ENCODE measurements at regions of chrX and their contacts with region 1.

Region 1: DNA sequence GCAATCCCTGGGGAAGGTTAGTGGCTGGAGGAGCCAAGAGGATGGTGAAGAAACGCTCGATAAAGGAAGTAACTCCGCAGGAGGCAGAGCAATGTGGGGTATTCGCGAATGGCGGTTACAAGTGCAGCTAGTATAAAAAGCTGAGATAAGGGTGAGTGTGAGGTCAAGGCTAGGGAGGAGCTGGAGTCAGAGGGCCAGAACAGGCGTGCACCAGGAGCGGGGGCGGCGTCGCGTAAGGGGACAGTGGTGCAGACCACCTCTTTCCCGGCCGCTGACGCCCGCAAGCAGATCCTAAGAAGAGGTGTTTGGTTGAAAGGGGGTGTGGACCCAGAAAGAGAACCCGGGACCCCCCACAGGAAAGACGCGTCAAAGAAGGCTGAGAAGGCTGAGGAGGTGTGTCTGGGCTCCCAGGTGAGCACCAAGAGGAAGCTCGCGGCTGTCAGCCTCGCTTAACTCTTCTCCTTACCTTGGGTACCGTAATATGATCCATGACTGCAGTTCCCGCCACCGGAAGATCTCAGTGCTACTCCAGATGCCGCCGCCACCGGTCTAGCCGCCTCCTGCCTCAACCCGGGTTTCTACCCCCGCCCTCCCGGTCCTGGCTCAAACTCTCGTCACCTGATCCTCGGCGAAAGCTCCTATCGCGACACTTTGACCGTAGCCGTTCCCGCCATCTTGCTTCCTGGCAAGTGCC is at the start of gene MTMR8:
- DNase-seq: peak; percentile 82
- ATAC-seq: peak; percentile 89
- H3K4me3 ChIP-seq: peak within 1 kb of the TSS; percentile 49 to 85 (median 72)
- H3K4me3 Mint-ChIP-seq: peak within 1 kb of the TSS; percentile 98
- H3K27ac ChIP-seq: peak within 1 kb of the TSS; percentile 24 to 65
- H3K27ac Mint-ChIP-seq: peak within 1 kb of the TSS; percentile 90
- H3K4me1 ChIP-seq: peaks cover 0 to 15% of the 10 kb centered on the region in 2 donors
- H3K4me1 Mint-ChIP-seq: peaks cover 35% of the 10 kb centered on the region
- H3K27me3 ChIP-seq: no peaks in the 10 kb centered on the region
- H3K27me3 Mint-ChIP-seq: no peaks in the 10 kb centered on the region
- CTCF ChIP-seq: no peak
- total RNA-seq, gene MTMR8: 11.6 and 11.8 TPM in 2 replicates

Region 2: DNA sequence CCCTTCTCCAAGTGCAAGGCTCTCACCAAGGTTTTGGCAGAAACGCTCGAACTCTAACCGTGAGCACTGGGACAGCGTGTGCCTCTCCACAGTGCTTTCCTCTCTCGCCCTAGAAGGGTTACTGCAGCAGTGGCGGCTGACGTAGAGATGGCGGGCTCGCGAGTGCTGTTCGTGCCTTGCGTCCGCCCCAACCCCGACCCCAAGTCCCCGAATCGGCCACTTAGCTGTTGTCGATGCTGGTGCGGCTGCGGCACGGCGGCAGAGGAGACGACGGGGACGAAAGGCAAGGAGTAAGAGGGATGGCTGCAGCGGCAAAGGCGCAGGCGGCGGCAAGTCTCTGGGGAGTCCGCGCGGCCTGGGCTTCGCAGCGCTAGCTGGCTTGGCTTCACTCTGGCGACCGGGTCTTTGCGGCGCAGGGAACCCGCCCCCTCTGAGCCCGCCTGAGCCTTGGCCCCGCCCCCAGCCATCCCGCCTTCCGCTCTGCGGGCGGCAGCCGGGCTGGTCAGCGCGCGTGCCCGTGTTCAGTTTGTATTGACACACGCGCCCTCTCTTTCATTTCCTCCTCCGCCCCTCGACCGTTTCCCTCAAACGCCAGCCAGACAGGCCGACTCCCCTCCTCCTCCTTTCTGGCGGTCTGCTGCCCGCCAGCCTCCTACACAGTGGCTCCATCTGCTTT is 1043.9 kb before region 1 on chrX and contains the start of gene SPIN4:
- CTCF ChIA-PET with region 1: no interaction called
- POLR2A ChIA-PET with region 1: no interaction called
- intact Hi-C with region 1: loop called (anchors 10 kb)
- DNase-seq: peak; percentile 77
- ATAC-seq: peak; percentile 95
- H3K4me3 ChIP-seq: peak within 1 kb of the TSS; percentile 55 to 70 (median 63)
- H3K4me3 Mint-ChIP-seq: peak within 1 kb of the TSS; percentile 99
- H3K27ac ChIP-seq: peak within 1 kb of the TSS; percentile 28 to 29
- H3K27ac Mint-ChIP-seq: peak within 1 kb of the TSS; percentile 88
- H3K4me1 ChIP-seq: peaks cover 0 to 3% of the 10 kb centered on the region in 2 donors
- H3K4me1 Mint-ChIP-seq: peaks cover 16% of the 10 kb centered on the region
- H3K27me3 ChIP-seq: no peaks in the 10 kb centered on the region
- H3K27me3 Mint-ChIP-seq: no peaks in the 10 kb centered on the region
- CTCF ChIP-seq: no peak
- total RNA-seq, gene SPIN4: 5.4 and 5.8 TPM in 2 replicates

Region 3: DNA sequence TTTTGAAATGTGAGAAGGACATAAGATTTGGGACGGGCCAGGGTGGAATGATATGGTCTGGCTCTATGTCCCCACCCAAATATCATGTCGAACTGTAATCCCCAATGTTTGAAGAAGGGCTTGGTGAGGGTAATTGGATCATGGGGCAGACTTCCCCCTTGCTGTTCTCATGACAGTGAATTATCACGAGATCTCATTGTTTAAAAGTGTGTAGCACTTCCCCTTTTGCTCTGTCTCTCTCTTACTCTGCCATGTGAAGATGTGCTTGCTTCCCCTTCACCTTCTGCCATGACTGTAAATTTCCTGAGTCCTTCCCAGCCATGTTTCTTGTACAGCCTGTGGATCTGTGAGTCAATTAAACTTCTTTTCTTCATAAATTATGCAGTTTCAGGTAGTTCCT is 17.3 kb before region 1 on chrX:
- CTCF ChIA-PET with region 1: no interaction called
- POLR2A ChIA-PET with region 1: no interaction called
- intact Hi-C with region 1: no loop called
- DNase-seq: no peak
- ATAC-seq: no peak
- H3K4me3 ChIP-seq: no peak overlapping the region
- H3K4me3 Mint-ChIP-seq: no peak overlapping the region
- H3K27ac ChIP-seq: no peak overlapping the region
- H3K27ac Mint-ChIP-seq: no peak overlapping the region
- H3K4me1 ChIP-seq: no peaks in the 10 kb centered on the region
- H3K4me1 Mint-ChIP-seq: peaks cover 4% of the 10 kb centered on the region
- H3K27me3 ChIP-seq: no peaks in the 10 kb centered on the region
- H3K27me3 Mint-ChIP-seq: no peaks in the 10 kb centered on the region
- CTCF ChIP-seq: no peak

Region 4: GRCh38 chrX:64975989-64976672 is 581.1 kb after region 1 on chrX and contains the start of gene ZC4H2:
- CTCF ChIA-PET with region 1: no interaction called
- POLR2A ChIA-PET with region 1: no interaction called
- intact Hi-C with region 1: loop called (anchors 2 kb)
- DNase-seq: peak; percentile 74
- ATAC-seq: peak; percentile 96
- H3K4me3 ChIP-seq: peak within 1 kb of the TSS; percentile 39 to 64 (median 58)
- H3K4me3 Mint-ChIP-seq: peak within 1 kb of the TSS; percentile 92
- H3K27ac ChIP-seq: peak within 1 kb of the TSS in 1 of 2 donors; percentile 33
- H3K27ac Mint-ChIP-seq: peak within 1 kb of the TSS; percentile 64
- H3K4me1 ChIP-seq: peaks cover 4 to 5% of the 10 kb centered on the region in 2 donors
- H3K4me1 Mint-ChIP-seq: peaks cover 15% of the 10 kb centered on the region
- H3K27me3 ChIP-seq: no peaks in the 10 kb centered on the region
- H3K27me3 Mint-ChIP-seq: no peaks in the 10 kb centered on the region
- CTCF ChIP-seq: no peak
- total RNA-seq, gene ZC4H2: 10.9 and 14.1 TPM in 2 replicates

Region 5: GRCh38 chrX:65034668-65035445 is 639.8 kb after region 1 on chrX:
- CTCF ChIA-PET with region 1: no interaction called
- POLR2A ChIA-PET with region 1: no interaction called
- intact Hi-C with region 1: loop called (anchors 10 kb)
- DNase-seq: peak; percentile 89
- ATAC-seq: peak; percentile 90
- H3K4me3 ChIP-seq: peak within 1 kb of the TSS; percentile 6 to 71 (median 68)
- H3K4me3 Mint-ChIP-seq: peak within 1 kb of the TSS; percentile 96
- H3K27ac ChIP-seq: peak within 1 kb of the TSS; percentile 73 to 85
- H3K27ac Mint-ChIP-seq: peak within 1 kb of the TSS; percentile 98
- H3K4me1 ChIP-seq: peaks cover 8 to 10% of the 10 kb centered on the region in 2 donors
- H3K4me1 Mint-ChIP-seq: peaks cover 24% of the 10 kb centered on the region
- H3K27me3 ChIP-seq: no peaks in the 10 kb centered on the region
- H3K27me3 Mint-ChIP-seq: no peaks in the 10 kb centered on the region
- CTCF ChIP-seq: peak; percentile 57